PC-3 (cell line): ENCODE measurements at regions of chr5 and their contacts with region 1.

Region 1: GRCh38 chr5:22088517-22088916 is 764.6 kb downstream of the CDH12 start:
- DNase-seq: no peak
- ATAC-seq: no peak
- H3K4me3 ChIP-seq: no peak overlapping the region
- H3K27ac ChIP-seq: no peak overlapping the region
- H3K4me1 ChIP-seq: no peaks in the 10 kb centered on the region
- H3K27me3 ChIP-seq: peaks cover 12% of the 10 kb centered on the region; the same call in 1 of the 2 replicates
- CTCF ChIP-seq: no peak

Region 2: DNA sequence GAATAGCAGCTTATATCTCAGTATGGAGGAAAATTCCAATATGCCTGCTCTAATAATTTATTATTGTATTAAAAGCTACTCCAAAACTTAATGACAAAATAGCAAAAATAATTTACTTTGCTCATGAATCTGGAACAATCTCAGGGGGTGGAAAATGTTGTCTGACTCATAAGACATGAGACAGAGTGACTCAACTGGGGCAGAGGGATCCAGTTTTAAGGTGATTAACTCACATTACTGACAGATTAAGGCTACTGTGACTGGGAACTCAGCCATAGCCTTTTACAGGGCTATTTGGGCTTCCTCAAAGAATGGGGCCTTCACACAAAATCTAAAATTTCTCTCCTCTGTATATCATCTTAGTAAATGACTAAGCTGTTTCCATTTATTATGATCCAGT is 408.3 kb before region 1 on chr5:
- CTCF ChIA-PET with region 1: no interaction called
- POLR2A ChIA-PET with region 1: no interaction called
- intact Hi-C with region 1: loop called (anchors 10 kb)
- DNase-seq: peak; percentile 96
- ATAC-seq: peak; percentile 97
- H3K4me3 ChIP-seq: no peak overlapping the region; the same call in 1 of the 2 replicates
- H3K27ac ChIP-seq: peak overlapping the region; percentile 87
- H3K4me1 ChIP-seq: peaks cover 31% of the 10 kb centered on the region
- H3K27me3 ChIP-seq: no peaks in the 10 kb centered on the region
- CTCF ChIP-seq: no peak

Region 3: DNA sequence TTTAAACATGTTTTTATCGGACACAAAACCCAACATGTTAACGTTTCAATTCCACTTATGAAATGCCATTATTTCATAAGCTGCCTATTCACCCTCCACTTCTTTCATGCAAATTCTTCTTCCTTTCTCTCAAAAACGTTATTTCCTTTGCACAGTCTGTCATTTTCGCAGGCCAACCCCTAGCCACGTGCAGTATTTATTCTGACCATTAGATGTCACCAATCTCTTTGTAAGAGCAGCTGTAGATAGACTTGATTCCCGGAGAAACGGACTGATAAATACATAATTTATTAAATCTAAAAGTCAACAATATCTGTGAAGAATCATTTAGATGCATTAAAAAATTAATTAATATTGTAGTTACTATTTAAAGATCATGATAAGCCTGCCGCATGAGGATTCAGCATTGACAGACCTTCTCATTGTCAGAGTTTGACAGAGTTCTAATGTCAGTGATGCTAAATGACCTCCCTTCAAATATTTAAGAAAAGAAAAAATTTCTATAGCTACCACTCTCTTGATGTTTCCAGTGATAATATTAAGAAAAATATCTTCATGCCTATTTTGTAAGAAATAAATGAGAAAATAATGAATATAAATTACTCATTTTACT is 169.0 kb before region 1 on chr5:
- CTCF ChIA-PET with region 1: no interaction called
- POLR2A ChIA-PET with region 1: no interaction called
- intact Hi-C with region 1: loop called (anchors 10 kb)
- DNase-seq: peak; percentile 73
- ATAC-seq: peak; percentile 72
- H3K4me3 ChIP-seq: no peak overlapping the region
- H3K27ac ChIP-seq: no peak overlapping the region
- H3K4me1 ChIP-seq: no peaks in the 10 kb centered on the region
- H3K27me3 ChIP-seq: peaks cover 12% of the 10 kb centered on the region; the same call in 1 of the 2 replicates
- CTCF ChIP-seq: peak; percentile 85